Panc1 (cell line): ENCODE measurements at regions of chr3 and their contacts with region 1.

Region 1: DNA sequence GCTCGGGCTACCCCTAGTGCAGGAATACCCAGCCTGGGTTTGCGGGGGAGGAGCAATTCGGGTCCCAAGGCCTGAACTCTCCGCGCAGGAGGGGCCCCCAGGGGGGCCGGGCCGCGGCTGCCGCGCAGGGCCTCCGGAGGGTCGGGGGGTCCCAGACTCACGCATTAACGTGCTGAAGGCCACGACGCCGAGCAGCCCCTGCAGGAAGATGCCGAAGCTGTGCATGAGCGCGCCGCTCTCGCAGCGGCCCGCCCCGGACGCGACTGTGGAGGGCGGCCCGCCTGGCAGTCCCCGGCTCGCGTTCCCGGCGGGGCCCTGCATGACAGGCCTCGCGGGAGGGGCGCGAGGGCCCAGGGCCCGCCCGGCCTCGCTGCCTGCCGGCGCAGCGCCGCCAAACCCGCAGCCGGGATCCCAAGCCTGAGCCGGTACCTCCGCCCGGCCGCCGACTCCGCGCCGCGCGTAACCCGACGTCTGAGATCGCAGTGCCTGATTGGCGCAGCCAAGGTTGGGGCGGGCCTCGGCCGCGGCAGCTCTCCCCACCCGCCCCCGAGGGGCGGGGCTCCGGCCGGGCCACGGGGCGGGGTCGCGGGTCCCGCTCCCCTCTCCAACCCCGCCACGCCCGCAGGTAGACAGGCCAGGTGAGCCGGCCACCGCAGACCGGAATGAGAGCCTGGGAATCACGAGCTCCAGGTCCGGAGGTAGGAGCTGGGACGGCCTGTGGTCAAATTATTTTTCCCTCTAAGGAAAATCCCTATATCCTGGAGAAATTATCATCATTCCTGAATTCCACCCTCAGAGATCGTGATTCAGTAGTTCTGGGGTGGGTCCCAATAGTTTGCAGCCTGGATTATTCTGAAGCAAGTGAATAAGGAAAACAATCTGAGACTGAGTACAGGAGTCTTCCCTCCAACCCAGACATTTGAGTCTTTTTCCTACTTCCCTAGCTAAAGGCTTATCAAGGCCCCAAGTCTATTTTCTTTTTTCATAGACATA is at the start of gene STIMATE:
- DNase-seq: no peak
- ATAC-seq: peak; percentile 99
- H3K4me3 ChIP-seq: peak within 1 kb of the TSS; percentile 78 to 80
- H3K27ac ChIP-seq: peak within 1 kb of the TSS; percentile 65
- H3K4me1 ChIP-seq: peaks cover 28% of the 10 kb centered on the region
- H3K27me3 ChIP-seq: no peaks in the 10 kb centered on the region
- CTCF ChIP-seq: no peak
- total RNA-seq, gene STIMATE: 15.7 TPM

Region 2: DNA sequence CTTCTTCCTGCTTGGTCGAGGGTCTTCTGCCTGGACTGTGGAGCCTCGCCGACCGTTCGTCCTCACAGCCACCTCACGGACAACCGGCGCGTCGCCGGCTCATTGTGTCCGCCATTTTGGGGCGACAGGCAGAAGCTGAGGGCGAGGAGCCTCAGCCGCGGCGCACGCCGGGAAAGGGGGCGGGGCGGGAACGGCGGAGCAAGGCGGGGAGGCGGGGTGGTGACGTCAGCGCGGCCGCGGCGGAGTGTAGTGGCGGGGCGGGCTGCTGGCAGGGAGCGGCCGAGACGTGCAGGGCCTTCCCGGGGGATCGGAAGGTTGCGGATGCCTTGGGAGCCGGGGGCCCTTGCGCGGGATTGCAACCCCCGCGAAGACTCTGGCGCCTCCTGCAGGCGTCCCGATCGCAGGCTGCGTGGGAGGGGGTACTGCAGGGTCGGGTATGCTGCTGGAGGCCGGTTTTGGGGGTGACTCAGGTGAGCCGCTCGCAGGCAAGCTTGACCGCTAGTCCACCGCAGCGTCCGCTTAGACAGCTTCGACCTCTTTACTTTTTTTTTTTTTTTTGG is 618.8 kb before region 1 on chr3 and contains the start of gene WDR82:
- CTCF ChIA-PET with region 1: no interaction called
- POLR2A ChIA-PET with region 1: no interaction called
- in situ Hi-C with region 1: no loop called
- intact Hi-C with region 1: no loop called
- DNase-seq: no peak
- ATAC-seq: peak; percentile 95
- H3K4me3 ChIP-seq: peak within 1 kb of the TSS; percentile 82 to 90
- H3K27ac ChIP-seq: peak within 1 kb of the TSS; percentile 87
- H3K4me1 ChIP-seq: peaks cover 30% of the 10 kb centered on the region
- H3K27me3 ChIP-seq: no peaks in the 10 kb centered on the region
- CTCF ChIP-seq: peak; percentile 32; the same call in 1 of the 2 replicates
- total RNA-seq, gene WDR82: 57.9 TPM

Region 3: GRCh38 chr3:52881871-52882270 is 15.6 kb before region 1 on chr3:
- CTCF ChIA-PET with region 1: no interaction called
- POLR2A ChIA-PET with region 1: interaction called, 16 read pairs
- in situ Hi-C with region 1: no loop called
- intact Hi-C with region 1: no loop called
- DNase-seq: no peak
- ATAC-seq: no peak
- H3K4me3 ChIP-seq: no peak overlapping the region
- H3K27ac ChIP-seq: no peak overlapping the region
- H3K4me1 ChIP-seq: no peaks in the 10 kb centered on the region
- H3K27me3 ChIP-seq: no peaks in the 10 kb centered on the region
- CTCF ChIP-seq: no peak

Region 4: GRCh38 chr3:52934630-52935530 is 37.5 kb after region 1 on chr3:
- CTCF ChIA-PET with region 1: interaction called, 10 read pairs
- POLR2A ChIA-PET with region 1: no interaction called
- in situ Hi-C with region 1: no loop called
- intact Hi-C with region 1: no loop called
- DNase-seq: peak; percentile 24
- ATAC-seq: peak; percentile 77; the same call in 1 of the 2 replicates
- H3K4me3 ChIP-seq: no peak overlapping the region
- H3K27ac ChIP-seq: no peak overlapping the region
- H3K4me1 ChIP-seq: no peaks in the 10 kb centered on the region
- H3K27me3 ChIP-seq: no peaks in the 10 kb centered on the region
- CTCF ChIP-seq: peak; percentile 81

Region 5: GRCh38 chr3:53030619-53031449 is 133.4 kb after region 1 on chr3:
- CTCF ChIA-PET with region 1: interaction called, 12 read pairs
- POLR2A ChIA-PET with region 1: no interaction called
- in situ Hi-C with region 1: no loop called
- intact Hi-C with region 1: no loop called
- DNase-seq: no peak
- ATAC-seq: no peak
- H3K4me3 ChIP-seq: no peak overlapping the region
- H3K27ac ChIP-seq: no peak overlapping the region
- H3K4me1 ChIP-seq: peaks cover 15% of the 10 kb centered on the region
- H3K27me3 ChIP-seq: no peaks in the 10 kb centered on the region
- CTCF ChIP-seq: no peak

Region 6: GRCh38 chr3:53250881-53251605 is 353.6 kb after region 1 on chr3:
- CTCF ChIA-PET with region 1: interaction called, 12 read pairs
- POLR2A ChIA-PET with region 1: no interaction called
- in situ Hi-C with region 1: no loop called
- intact Hi-C with region 1: no loop called
- DNase-seq: no peak
- ATAC-seq: no peak
- H3K4me3 ChIP-seq: peak overlapping the region in 1 of 2 experiments; percentile 27; a peak in 2 of 4 replicates
- H3K27ac ChIP-seq: 0 out of 2 replicates have a peak overlapping the region, but pooled peaks have one; percentile 34
- H3K4me1 ChIP-seq: peaks cover 32% of the 10 kb centered on the region
- H3K27me3 ChIP-seq: no peaks in the 10 kb centered on the region
- CTCF ChIP-seq: no peak